Activated naive CD8-positive, alpha-beta T cell treated with anti-CD3 and anti-CD28 coated beads, Interleukin-2, amount 10 ng/mL, durations not matched to agents 7 days and 5 days (primary cell): ENCODE measurements at regions of chr14 and their contacts with region 1.

Region 1: GRCh38 chr14:105065280-105066228 is at the start of gene GPR132:
- DNase-seq: peak; percentile 80
- ATAC-seq: peak; percentile 84
- H3K4me3 Mint-ChIP-seq: peak within 1 kb of the TSS; percentile 89
- H3K27ac Mint-ChIP-seq: peak within 1 kb of the TSS; percentile 94
- H3K4me1 Mint-ChIP-seq: peaks cover 46% of the 10 kb centered on the region
- H3K27me3 Mint-ChIP-seq: no peaks in the 10 kb centered on the region
- total RNA-seq, gene GPR132: 43.5 to 46.6 TPM

Region 2: GRCh38 chr14:105005929-105006830 is 59.4 kb before region 1 on chr14:
- POLR2A ChIA-PET with region 1: no interaction called
- DNase-seq: no peak
- ATAC-seq: peak; percentile 9
- H3K4me3 Mint-ChIP-seq: no peak overlapping the region
- H3K27ac Mint-ChIP-seq: no peak overlapping the region
- H3K4me1 Mint-ChIP-seq: no peaks in the 10 kb centered on the region
- H3K27me3 Mint-ChIP-seq: no peaks in the 10 kb centered on the region

Region 3: GRCh38 chr14:105020815-105021655 is 44.5 kb before region 1 on chr14 and contains the start of gene CDCA4:
- POLR2A ChIA-PET with region 1: interaction called, 15 read pairs
- DNase-seq: peak; percentile 99
- ATAC-seq: peak; percentile 90
- H3K4me3 Mint-ChIP-seq: peak within 1 kb of the TSS; percentile 93
- H3K27ac Mint-ChIP-seq: peak within 1 kb of the TSS; percentile 85
- H3K4me1 Mint-ChIP-seq: peaks cover 32% of the 10 kb centered on the region
- H3K27me3 Mint-ChIP-seq: no peaks in the 10 kb centered on the region
- total RNA-seq, gene CDCA4: 51.7 to 53.3 TPM

Region 4: DNA sequence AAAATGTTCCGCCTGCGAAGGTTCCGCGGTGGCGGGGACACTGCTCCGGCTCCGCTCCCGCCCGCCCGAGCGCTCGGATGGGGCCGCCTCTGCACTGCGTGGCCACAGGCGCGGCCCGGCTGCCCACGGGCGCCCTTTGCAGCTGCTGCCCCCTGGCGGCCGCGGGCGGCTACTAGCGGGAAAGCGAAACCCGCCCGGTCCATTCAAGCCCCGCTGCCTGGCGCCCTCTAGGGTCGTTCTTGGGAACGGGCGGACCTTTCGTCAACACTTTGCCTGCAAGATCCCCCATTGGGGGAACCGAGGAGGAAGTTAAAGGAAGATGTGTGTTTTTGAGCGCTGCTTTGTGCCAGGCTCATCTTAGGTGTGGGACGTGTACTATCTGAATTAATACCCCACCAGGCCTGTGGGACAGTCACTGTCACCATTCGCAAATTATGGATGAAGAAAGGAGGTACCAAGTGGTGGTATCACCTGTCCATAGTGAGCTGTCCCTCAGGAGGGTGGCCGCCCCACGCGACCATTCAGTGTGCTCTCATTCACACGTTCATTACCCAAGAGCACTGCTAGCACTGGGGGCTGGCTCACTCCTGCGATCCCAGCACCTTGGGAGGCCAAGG is 19.7 kb before region 1 on chr14:
- POLR2A ChIA-PET with region 1: interaction called, 10 read pairs
- DNase-seq: peak; percentile 97
- ATAC-seq: peak; percentile 85
- H3K4me3 Mint-ChIP-seq: peak overlapping the region; percentile 25
- H3K27ac Mint-ChIP-seq: peak overlapping the region; percentile 15
- H3K4me1 Mint-ChIP-seq: peaks cover 14% of the 10 kb centered on the region
- H3K27me3 Mint-ChIP-seq: peaks cover 5% of the 10 kb centered on the region

Region 5: GRCh38 chr14:105075379-105076295 is 10.1 kb after region 1 on chr14:
- POLR2A ChIA-PET with region 1: interaction called, 176 read pairs
- DNase-seq: peak; percentile 72
- ATAC-seq: peak; percentile 85
- H3K4me3 Mint-ChIP-seq: peak overlapping the region; percentile 68
- H3K27ac Mint-ChIP-seq: peak overlapping the region; percentile 72
- H3K4me1 Mint-ChIP-seq: peaks cover 17% of the 10 kb centered on the region
- H3K27me3 Mint-ChIP-seq: peaks cover 8% of the 10 kb centered on the region

Region 6: GRCh38 chr14:105086833-105087307 is 21.3 kb after region 1 on chr14:
- POLR2A ChIA-PET with region 1: interaction called, 62 read pairs
- DNase-seq: peak; percentile 94
- ATAC-seq: peak; percentile 87
- H3K4me3 Mint-ChIP-seq: peak overlapping the region; percentile 78
- H3K27ac Mint-ChIP-seq: peak overlapping the region; percentile 63
- H3K4me1 Mint-ChIP-seq: peaks cover 16% of the 10 kb centered on the region
- H3K27me3 Mint-ChIP-seq: peaks cover 12% of the 10 kb centered on the region

Region 7: GRCh38 chr14:105107781-105108515 is 42.4 kb after region 1 on chr14:
- POLR2A ChIA-PET with region 1: no interaction called
- DNase-seq: no peak
- ATAC-seq: no peak
- H3K4me3 Mint-ChIP-seq: no peak overlapping the region
- H3K27ac Mint-ChIP-seq: no peak overlapping the region
- H3K4me1 Mint-ChIP-seq: peaks cover 3% of the 10 kb centered on the region
- H3K27me3 Mint-ChIP-seq: peaks cover 37% of the 10 kb centered on the region

Region 8: GRCh38 chr14:105300792-105301533 is 235.4 kb after region 1 on chr14 and contains the start of gene BRF1:
- POLR2A ChIA-PET with region 1: interaction called, 11 read pairs
- DNase-seq: peak; percentile 100
- ATAC-seq: peak; percentile 87
- H3K4me3 Mint-ChIP-seq: peak within 1 kb of the TSS; percentile 94
- H3K27ac Mint-ChIP-seq: peak within 1 kb of the TSS; percentile 95
- H3K4me1 Mint-ChIP-seq: peaks cover 32% of the 10 kb centered on the region
- H3K27me3 Mint-ChIP-seq: peaks cover 2% of the 10 kb centered on the region
- total RNA-seq, gene BRF1: 49.5 to 50.4 TPM